ENCODE measurements at regions of chr15 and their contacts with region 1.

Region 1: DNA sequence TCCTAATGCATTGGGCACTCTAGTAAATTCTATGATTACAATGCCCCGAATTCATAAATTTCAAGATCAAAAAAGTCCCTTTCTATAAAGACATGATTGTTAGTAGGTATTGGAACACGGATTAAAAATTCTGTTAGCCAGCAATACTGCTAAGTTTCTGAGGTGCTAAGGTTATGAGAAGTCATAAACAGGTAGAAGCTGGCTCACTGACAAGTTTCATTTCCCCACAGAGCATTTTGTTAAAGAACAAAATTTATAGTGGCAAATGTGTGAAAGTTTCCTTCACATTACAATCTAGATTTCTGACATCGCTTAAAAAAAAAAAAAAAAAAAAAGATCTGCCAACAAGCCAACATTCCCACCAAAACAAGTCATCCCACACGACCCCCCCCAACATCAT is 12.4 kb upstream of the MAN2C1 start:
- DNase-seq: no peak
- H3K4me3 ChIP-seq: no peak overlapping the region
- CTCF ChIP-seq: no peak

Region 2: DNA sequence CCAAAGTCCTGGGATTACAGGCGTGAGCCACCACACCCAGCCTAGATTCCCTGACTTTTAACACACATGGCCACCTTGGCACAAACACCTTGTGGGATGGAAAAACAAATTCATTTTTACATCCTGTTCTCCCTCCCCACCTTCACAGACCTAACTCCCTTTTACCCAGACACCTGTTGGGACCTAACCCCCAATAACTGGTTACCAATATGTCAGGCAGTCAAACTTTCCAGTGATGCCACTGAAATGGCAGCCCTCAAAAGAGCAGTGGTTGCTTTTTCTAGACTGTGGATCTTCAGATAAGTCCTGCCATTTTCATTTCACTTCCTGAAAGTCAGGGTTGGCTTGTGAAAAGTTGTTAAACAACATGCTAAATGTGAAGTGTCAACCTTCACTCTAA is 35.8 kb after region 1 on chr15:
- in situ Hi-C with region 1: loop called (anchors 5 kb)
- DNase-seq: no peak
- H3K4me3 ChIP-seq: no peak overlapping the region
- CTCF ChIP-seq: no peak

Region 3: GRCh38 chr15:75453703-75454470 is 73.1 kb after region 1 on chr15:
- in situ Hi-C with region 1: no loop called
- DNase-seq: peak; percentile 100
- H3K4me3 ChIP-seq: peak overlapping the region; percentile 93
- CTCF ChIP-seq: no peak